Caco-2 (cell line): ENCODE measurements at regions of chr6 and their contacts with region 1.

Region 1: GRCh38 chr6:158853072-158853871 is 34.1 kb upstream of the EZR start:
- DNase-seq: peak; percentile 95 to 98
- H3K4me3 ChIP-seq: peak overlapping the region; percentile 21
- H3K4me3 Mint-ChIP-seq: no peak overlapping the region
- H3K27ac Mint-ChIP-seq: no peak overlapping the region
- H3K4me1 ChIP-seq: peaks cover 64% of the 10 kb centered on the region
- H3K4me1 Mint-ChIP-seq: peaks cover 27% of the 10 kb centered on the region
- H3K27me3 ChIP-seq: no peaks in the 10 kb centered on the region
- H3K27me3 Mint-ChIP-seq: no peaks in the 10 kb centered on the region
- CTCF ChIP-seq: no peak

Region 2: GRCh38 chr6:158863646-158864045 is 10.4 kb after region 1 on chr6:
- CTCF ChIA-PET with region 1: no interaction called
- POLR2A ChIA-PET with region 1: interaction called, 55 read pairs
- intact Hi-C with region 1: loop called (anchors 1 kb)
- DNase-seq: peak; percentile 63 to 70
- H3K4me3 ChIP-seq: no peak overlapping the region
- H3K4me3 Mint-ChIP-seq: peak overlapping the region; percentile 4
- H3K27ac Mint-ChIP-seq: peak overlapping the region; percentile 89
- H3K4me1 ChIP-seq: peaks cover 53% of the 10 kb centered on the region
- H3K4me1 Mint-ChIP-seq: peaks cover 42% of the 10 kb centered on the region
- H3K27me3 ChIP-seq: no peaks in the 10 kb centered on the region
- H3K27me3 Mint-ChIP-seq: no peaks in the 10 kb centered on the region
- CTCF ChIP-seq: no peak

Region 3: GRCh38 chr6:158879180-158879579 is 25.9 kb after region 1 on chr6:
- CTCF ChIA-PET with region 1: no interaction called
- POLR2A ChIA-PET with region 1: no interaction called
- intact Hi-C with region 1: no loop called
- DNase-seq: no peak
- H3K4me3 ChIP-seq: no peak overlapping the region
- H3K4me3 Mint-ChIP-seq: no peak overlapping the region
- H3K27ac Mint-ChIP-seq: peak overlapping the region; percentile 63
- H3K4me1 ChIP-seq: peaks cover 35% of the 10 kb centered on the region
- H3K4me1 Mint-ChIP-seq: no peaks in the 10 kb centered on the region
- H3K27me3 ChIP-seq: no peaks in the 10 kb centered on the region
- H3K27me3 Mint-ChIP-seq: no peaks in the 10 kb centered on the region
- CTCF ChIP-seq: no peak

Region 4: GRCh38 chr6:158894193-158894592 is 40.9 kb after region 1 on chr6:
- CTCF ChIA-PET with region 1: no interaction called
- POLR2A ChIA-PET with region 1: interaction called, 3 read pairs
- intact Hi-C with region 1: loop called (anchors 1 kb)
- DNase-seq: peak; percentile 66 to 69
- H3K4me3 ChIP-seq: no peak overlapping the region
- H3K4me3 Mint-ChIP-seq: no peak overlapping the region
- H3K27ac Mint-ChIP-seq: peak overlapping the region; percentile 73
- H3K4me1 ChIP-seq: peaks cover 16% of the 10 kb centered on the region
- H3K4me1 Mint-ChIP-seq: peaks cover 6% of the 10 kb centered on the region
- H3K27me3 ChIP-seq: no peaks in the 10 kb centered on the region
- H3K27me3 Mint-ChIP-seq: no peaks in the 10 kb centered on the region
- CTCF ChIP-seq: no peak

Region 5: GRCh38 chr6:158933079-158933595 is 79.9 kb after region 1 on chr6:
- CTCF ChIA-PET with region 1: no interaction called
- POLR2A ChIA-PET with region 1: no interaction called
- intact Hi-C with region 1: no loop called
- DNase-seq: no peak
- H3K4me3 ChIP-seq: no peak overlapping the region
- H3K4me3 Mint-ChIP-seq: no peak overlapping the region
- H3K27ac Mint-ChIP-seq: no peak overlapping the region
- H3K4me1 ChIP-seq: no peaks in the 10 kb centered on the region; the same call in 1 of the 2 replicates
- H3K4me1 Mint-ChIP-seq: peaks cover 2% of the 10 kb centered on the region
- H3K27me3 ChIP-seq: no peaks in the 10 kb centered on the region
- H3K27me3 Mint-ChIP-seq: no peaks in the 10 kb centered on the region
- CTCF ChIP-seq: no peak